CD8-positive, alpha-beta T cell (primary cell): ENCODE measurements at regions of chr15 and their contacts with region 1.

Region 1: DNA sequence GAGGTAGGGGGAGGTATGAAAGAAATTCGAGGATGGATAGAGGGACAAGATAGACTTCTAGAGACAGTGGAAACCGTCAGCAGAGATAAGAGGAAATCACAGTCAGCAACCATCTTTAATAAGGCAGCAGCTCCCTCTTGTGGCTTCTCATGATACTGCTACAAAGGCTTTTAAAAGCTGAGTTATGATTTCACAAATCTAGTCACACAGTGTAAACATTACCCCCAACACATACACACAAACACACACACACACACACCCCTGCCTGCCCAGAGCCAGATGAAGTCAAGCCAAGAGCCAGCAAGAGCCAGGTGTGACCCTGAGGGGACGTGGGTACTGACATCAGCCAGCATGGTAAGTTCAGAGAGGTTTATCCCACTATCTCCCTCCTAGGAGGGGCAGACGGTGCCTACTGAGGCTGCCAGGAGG is 18.9 kb upstream of the TGM5 start:
- DNase-seq: peak; percentile 15 to 75 (median 56)
- ATAC-seq: peak; percentile 89
- H3K4me3 ChIP-seq: no peak overlapping the region
- H3K4me3 Mint-ChIP-seq: no peak overlapping the region
- H3K27ac ChIP-seq: no peak overlapping the region
- H3K27ac Mint-ChIP-seq: no peak overlapping the region
- H3K4me1 ChIP-seq: no peaks in the 10 kb centered on the region
- H3K4me1 Mint-ChIP-seq: peaks cover 2% of the 10 kb centered on the region
- H3K27me3 ChIP-seq: peaks cover 0 to 3% of the 10 kb centered on the region in 2 experiments
- H3K27me3 Mint-ChIP-seq: peaks cover 14% of the 10 kb centered on the region
- CTCF ChIP-seq: peak; percentile 73

Region 2: DNA sequence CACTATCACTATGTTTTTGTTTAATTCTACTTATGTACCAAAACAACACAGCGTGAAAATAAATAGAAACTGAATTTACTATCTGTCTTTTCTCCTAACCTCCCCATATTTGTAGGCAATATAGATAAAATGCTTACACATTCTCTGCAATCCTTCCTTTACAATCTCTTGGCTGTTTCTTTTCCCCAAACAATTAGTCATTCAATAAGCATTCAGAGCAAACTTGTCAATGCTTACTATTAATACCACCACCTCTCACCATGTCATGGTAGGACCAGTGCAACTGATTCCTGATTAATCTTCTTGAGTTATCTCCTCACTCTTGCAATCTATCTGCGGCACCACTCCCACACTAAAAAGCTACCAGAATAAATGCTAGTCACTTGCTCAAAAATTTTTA is 291.1 kb before region 1 on chr15:
- CTCF ChIA-PET with region 1: no interaction called
- POLR2A ChIA-PET with region 1: no interaction called
- intact Hi-C with region 1: no loop called
- DNase-seq: no peak
- ATAC-seq: no peak
- H3K4me3 ChIP-seq: no peak overlapping the region
- H3K4me3 Mint-ChIP-seq: no peak overlapping the region
- H3K27ac ChIP-seq: no peak overlapping the region
- H3K27ac Mint-ChIP-seq: no peak overlapping the region
- H3K4me1 ChIP-seq: no peaks in the 10 kb centered on the region
- H3K4me1 Mint-ChIP-seq: no peaks in the 10 kb centered on the region
- H3K27me3 ChIP-seq: no peaks in the 10 kb centered on the region
- H3K27me3 Mint-ChIP-seq: no peaks in the 10 kb centered on the region
- CTCF ChIP-seq: no peak

Region 3: GRCh38 chr15:43185157-43186017 is 100.2 kb before region 1 on chr15 and contains the start of gene CCNDBP1:
- CTCF ChIA-PET with region 1: interaction called, 4 read pairs
- POLR2A ChIA-PET with region 1: no interaction called
- intact Hi-C with region 1: loop called in 1 of 2 experiments (anchors 1 kb)
- DNase-seq: peak; percentile 73 to 93 (median 86)
- ATAC-seq: peak; percentile 75
- H3K4me3 ChIP-seq: peak within 1 kb of the TSS; percentile 82 to 97
- H3K4me3 Mint-ChIP-seq: peak within 1 kb of the TSS; percentile 97
- H3K27ac ChIP-seq: peak within 1 kb of the TSS; percentile 87 to 91
- H3K27ac Mint-ChIP-seq: peak within 1 kb of the TSS; percentile 98
- H3K4me1 ChIP-seq: peaks cover 18% of the 10 kb centered on the region
- H3K4me1 Mint-ChIP-seq: peaks cover 43% of the 10 kb centered on the region
- H3K27me3 ChIP-seq: no peaks in the 10 kb centered on the region
- H3K27me3 Mint-ChIP-seq: no peaks in the 10 kb centered on the region
- CTCF ChIP-seq: peak; percentile 56
- total RNA-seq, gene CCNDBP1: 80.3 to 81.1 TPM

Region 4: GRCh38 chr15:43230640-43231115 is 54.9 kb before region 1 on chr15:
- CTCF ChIA-PET with region 1: interaction called, 121 read pairs
- POLR2A ChIA-PET with region 1: interaction called, 10 read pairs
- intact Hi-C with region 1: loop called in 1 of 2 experiments (anchors 1 kb)
- DNase-seq: no peak
- ATAC-seq: no peak
- H3K4me3 ChIP-seq: no peak overlapping the region
- H3K4me3 Mint-ChIP-seq: no peak overlapping the region
- H3K27ac ChIP-seq: no peak overlapping the region
- H3K27ac Mint-ChIP-seq: no peak overlapping the region
- H3K4me1 ChIP-seq: no peaks in the 10 kb centered on the region
- H3K4me1 Mint-ChIP-seq: peaks cover 3% of the 10 kb centered on the region
- H3K27me3 ChIP-seq: no peaks in the 10 kb centered on the region
- H3K27me3 Mint-ChIP-seq: peaks cover 8% of the 10 kb centered on the region
- CTCF ChIP-seq: no peak

Region 5: DNA sequence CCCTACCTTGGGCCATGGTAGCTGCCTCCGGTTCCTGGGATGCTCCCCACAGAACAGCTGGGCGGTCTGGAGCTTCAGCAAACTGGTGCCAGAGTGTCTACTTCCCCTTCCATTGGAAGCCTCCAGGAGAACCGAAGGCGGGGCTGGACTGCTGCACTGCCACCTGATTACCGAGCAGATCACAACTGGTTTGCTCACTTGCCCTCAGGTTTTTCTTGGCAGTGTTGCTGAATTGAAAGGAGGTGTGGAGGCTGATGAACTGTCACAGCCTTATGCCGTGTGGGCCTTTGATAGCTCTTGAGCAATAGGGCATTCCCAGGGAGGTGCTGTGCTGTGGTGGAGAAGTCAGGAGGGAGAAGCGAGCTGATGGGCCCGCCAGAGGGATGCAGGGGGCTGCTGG is 18.8 kb before region 1 on chr15 and contains the start of gene TGM5:
- CTCF ChIA-PET with region 1: interaction called, 15 read pairs
- POLR2A ChIA-PET with region 1: no interaction called
- intact Hi-C with region 1: no loop called
- DNase-seq: peak in 1 of 9 experiments; percentile 39
- ATAC-seq: no peak
- H3K4me3 ChIP-seq: no peak within 1 kb of the TSS
- H3K4me3 Mint-ChIP-seq: no peak within 1 kb of the TSS
- H3K27ac ChIP-seq: no peak within 1 kb of the TSS
- H3K27ac Mint-ChIP-seq: no peak within 1 kb of the TSS
- H3K4me1 ChIP-seq: no peaks in the 10 kb centered on the region
- H3K4me1 Mint-ChIP-seq: peaks cover 8% of the 10 kb centered on the region
- H3K27me3 ChIP-seq: no peaks in the 10 kb centered on the region
- H3K27me3 Mint-ChIP-seq: peaks cover 3% of the 10 kb centered on the region
- CTCF ChIP-seq: no peak
- total RNA-seq, gene TGM5: not detected